A673 (cell line): ENCODE measurements at regions of chr11 and their contacts with region 1.

Region 1: DNA sequence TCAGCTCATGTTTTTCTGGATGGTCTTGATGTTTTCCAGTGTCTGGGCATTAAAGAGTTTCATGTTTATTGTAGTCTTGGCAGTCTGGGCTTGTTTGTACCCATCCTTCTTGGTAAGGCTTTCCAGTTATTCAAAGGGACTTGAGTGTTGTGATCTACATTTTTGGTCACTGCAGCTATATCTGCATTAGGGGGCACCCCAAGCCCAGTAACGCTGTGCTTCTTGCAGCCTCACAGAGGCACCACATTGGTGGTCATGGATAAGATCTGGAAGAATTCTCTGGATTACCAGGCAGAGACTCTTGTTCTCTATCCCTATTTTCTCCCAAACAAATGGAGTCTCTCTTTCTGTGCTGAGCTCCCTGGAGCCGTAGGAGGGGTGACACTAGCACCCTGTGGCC is 451.5 kb upstream of the FAT3 start:
- DNase-seq: peak; percentile 86
- H3K4me3 ChIP-seq: no peak overlapping the region
- H3K27ac ChIP-seq: no peak overlapping the region
- H3K4me1 ChIP-seq: peaks cover 9% of the 10 kb centered on the region
- H3K27me3 ChIP-seq: no peaks in the 10 kb centered on the region
- CTCF ChIP-seq: peak; percentile 81

Region 2: GRCh38 chr11:92061456-92062062 is 288.5 kb after region 1 on chr11:
- CTCF ChIA-PET with region 1: no interaction called
- POLR2A ChIA-PET with region 1: no interaction called
- intact Hi-C with region 1: loop called (anchors 10 kb)
- DNase-seq: no peak
- H3K4me3 ChIP-seq: no peak overlapping the region
- H3K27ac ChIP-seq: no peak overlapping the region
- H3K4me1 ChIP-seq: no peaks in the 10 kb centered on the region
- H3K27me3 ChIP-seq: no peaks in the 10 kb centered on the region
- CTCF ChIP-seq: no peak

Region 3: GRCh38 chr11:92224407-92225124 is 451.5 kb after region 1 on chr11 and contains the start of gene FAT3:
- CTCF ChIA-PET with region 1: no interaction called
- POLR2A ChIA-PET with region 1: no interaction called
- intact Hi-C with region 1: loop called (anchors 5 kb)
- DNase-seq: peak; percentile 82
- H3K4me3 ChIP-seq: peak within 1 kb of the TSS; percentile 54
- H3K27ac ChIP-seq: no peak within 1 kb of the TSS
- H3K4me1 ChIP-seq: peaks cover 16% of the 10 kb centered on the region
- H3K27me3 ChIP-seq: peaks cover 44% of the 10 kb centered on the region
- CTCF ChIP-seq: no peak
- total RNA-seq, gene FAT3: 7.3 and 9.1 TPM in 2 replicates